Right ventricle myocardium inferior (tissue), 1 donor: ENCODE measurements at regions of chr1 and their contacts with region 1.

Region 1: GRCh38 chr1:14733048-14733778 is 134.7 kb downstream of the KAZN start:
- DNase-seq: no peak
- ATAC-seq: no peak

Region 2: DNA sequence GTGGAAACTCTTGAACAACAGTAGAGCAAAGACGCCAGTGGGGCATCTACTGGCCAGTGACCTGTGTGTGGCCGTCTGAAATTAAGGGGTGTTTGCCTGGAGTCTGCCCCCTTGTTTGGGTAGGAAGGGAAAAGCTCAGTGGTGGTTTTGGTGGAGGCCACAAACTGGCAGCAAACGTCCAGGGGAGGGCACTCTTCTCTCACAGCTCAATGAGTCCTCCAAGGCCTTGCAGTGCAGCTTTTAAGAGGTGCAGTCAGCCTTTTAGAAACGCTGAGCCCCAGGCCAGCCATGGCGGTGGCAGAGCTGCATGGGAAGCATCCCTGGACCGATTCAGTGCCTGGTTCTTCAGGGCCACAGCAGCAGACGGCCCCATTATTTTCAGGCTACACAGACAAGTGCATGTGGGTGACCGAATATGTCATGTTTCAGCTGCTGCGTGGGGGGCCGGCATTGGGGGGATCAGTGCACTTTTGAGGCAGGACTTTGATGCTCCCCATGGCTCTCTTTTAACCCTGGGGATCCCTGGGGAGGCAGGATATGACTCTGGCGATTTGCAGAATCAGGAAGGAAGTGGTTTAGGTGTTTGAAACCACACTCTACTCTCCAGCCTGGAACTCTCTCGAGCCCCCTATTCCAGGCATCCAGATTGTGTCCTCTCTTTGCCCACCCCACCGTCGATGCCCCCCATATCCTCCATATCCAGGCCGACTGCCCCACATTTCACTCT is 619.2 kb before region 1 on chr1:
- intact Hi-C with region 1: loop called (anchors 5 kb)
- DNase-seq: no peak
- ATAC-seq: peak; percentile 73

Region 3: GRCh38 chr1:14452551-14452950 is 280.7 kb before region 1 on chr1:
- intact Hi-C with region 1: no loop called
- DNase-seq: no peak
- ATAC-seq: no peak